Breast epithelium (tissue), 4 donors: ENCODE measurements at regions of chr1 and their contacts with region 1.

Region 1: DNA sequence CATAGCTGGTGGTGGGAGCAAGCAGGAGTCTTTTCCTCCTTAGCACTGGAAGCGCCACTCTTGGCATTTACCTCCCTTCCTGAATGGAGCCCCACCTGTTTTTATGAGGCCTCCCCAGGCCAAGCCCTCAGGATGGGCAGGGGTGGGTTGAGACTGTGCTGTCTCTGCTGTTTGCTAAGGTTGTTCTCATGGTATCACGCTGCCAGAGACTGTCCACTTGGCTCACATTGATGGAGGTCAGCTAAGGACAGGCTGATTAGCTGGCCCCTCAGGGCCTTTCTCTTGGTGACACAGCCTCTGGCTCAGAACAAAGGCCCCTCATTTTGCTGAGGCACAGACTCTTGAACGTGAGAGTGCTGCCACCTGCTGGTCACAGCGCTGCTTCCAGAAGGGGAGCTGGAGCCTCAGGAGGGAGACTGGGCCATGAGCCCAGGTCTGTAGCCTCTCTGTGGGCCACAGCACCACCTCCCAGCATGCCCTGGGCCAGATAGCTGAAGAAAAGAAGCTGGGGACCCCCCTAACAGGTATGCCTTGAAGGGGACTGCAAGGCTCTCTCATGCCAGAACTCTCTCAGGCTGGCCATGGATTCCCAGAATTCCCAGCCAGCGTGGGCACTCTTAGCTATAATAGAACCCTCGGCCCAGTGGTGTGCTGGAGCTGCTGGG is 85.6 kb downstream of the CD58 start:
- DNase-seq: peak; percentile 52 to 87
- H3K4me3 ChIP-seq: no peak overlapping the region
- H3K27ac ChIP-seq: no peak overlapping the region
- H3K4me1 ChIP-seq: peaks cover 0 to 4% of the 10 kb centered on the region in 2 donors
- H3K27me3 ChIP-seq: no peaks in the 10 kb centered on the region
- CTCF ChIP-seq: peak; percentile 64 to 86 (median 85)
- POLR2A ChIP-seq: no peak

Region 2: DNA sequence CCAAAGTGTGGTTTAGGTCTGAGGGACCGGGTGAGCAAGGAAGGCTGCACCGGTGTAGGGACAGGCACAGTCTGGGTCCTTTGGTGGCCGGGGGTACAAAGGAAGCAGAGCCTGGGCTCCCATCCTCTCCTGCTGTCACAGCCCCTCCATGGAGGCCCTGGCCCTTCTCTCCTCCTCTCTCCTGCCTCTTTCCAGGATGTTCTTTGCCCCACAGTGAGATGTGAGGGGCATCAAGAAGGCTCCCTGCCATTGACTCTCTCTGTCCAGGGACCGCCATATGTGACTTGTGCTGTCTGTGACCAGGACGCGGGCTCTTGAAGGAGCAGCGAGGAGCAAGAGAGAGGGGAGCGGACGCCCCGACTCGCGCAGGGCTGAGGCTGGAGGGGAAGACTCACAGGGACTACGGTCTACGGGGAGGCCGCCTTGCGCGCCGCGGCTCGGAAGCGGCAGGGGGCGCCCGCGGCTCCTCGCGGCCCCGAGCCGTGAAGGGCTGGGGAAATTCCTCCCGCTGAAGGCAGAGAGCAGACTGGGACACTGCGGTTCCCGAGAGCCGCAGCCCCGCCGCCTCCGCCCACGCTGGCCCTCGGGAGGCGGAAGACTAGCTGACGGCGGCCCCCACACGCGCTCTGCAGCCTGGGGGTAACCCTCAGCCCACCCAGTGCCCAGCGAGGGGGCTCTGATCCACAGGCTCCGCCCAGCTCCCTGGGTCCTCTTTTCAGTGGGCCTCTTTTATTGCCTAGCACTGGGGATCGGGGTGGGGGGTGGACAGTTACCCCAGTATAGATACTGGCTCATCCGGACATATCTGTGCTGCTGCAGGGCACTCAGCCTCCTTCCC is 333.2 kb before region 1 on chr1:
- intact Hi-C with region 1: loop called (anchors 5 kb)
- DNase-seq: peak; percentile 59 to 75
- H3K4me3 ChIP-seq: peak overlapping the region; percentile 43 to 67 (median 47)
- H3K27ac ChIP-seq: peak overlapping the region; percentile 57 to 76
- H3K4me1 ChIP-seq: no peaks in the 10 kb centered on the region
- H3K27me3 ChIP-seq: no peaks in the 10 kb centered on the region
- CTCF ChIP-seq: peak; percentile 46 to 93 (median 92)
- POLR2A ChIP-seq: no peak

Region 3: DNA sequence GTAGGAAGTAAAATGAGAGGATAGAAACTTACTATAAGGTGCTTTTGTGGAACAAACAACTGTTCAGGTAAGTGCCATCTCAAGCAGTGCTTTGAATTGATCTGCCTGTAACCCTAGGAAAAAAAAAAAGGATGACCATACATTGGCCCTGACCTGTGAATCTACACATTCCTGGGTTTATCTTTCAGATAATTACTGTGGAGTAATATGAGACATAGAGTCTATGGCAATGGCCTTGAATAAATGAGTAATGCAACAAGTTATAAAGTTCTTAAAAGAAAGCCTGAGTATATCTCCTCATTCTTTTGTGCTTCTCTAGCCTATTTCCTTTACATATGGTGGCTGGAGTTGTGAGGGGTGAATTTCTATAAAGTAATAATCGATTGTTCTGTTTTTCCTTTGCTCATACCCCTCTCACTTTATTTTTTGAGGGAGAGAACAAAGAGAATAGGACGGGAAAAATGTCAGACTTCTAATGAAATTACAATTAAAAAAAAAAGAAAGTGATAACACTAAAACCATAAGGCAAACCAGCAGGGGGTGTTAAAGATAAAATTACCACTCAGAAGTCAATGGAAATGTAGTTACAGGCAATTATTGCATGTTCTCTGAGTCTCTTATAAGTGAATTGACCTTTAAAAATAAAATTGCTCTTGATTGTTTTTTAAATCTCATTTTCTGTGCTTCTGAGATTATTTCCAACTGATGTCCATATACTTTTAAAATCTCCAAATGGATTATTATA is 124.6 kb before region 1 on chr1:
- intact Hi-C with region 1: loop called (anchors 10 kb)
- DNase-seq: no peak
- H3K4me3 ChIP-seq: no peak overlapping the region
- H3K27ac ChIP-seq: no peak overlapping the region
- H3K4me1 ChIP-seq: no peaks in the 10 kb centered on the region
- H3K27me3 ChIP-seq: no peaks in the 10 kb centered on the region
- CTCF ChIP-seq: peak in 1 of 3 donors; percentile 21
- POLR2A ChIP-seq: no peak

Region 4: GRCh38 chr1:116448813-116449281 is 36.4 kb before region 1 on chr1:
- intact Hi-C with region 1: no loop called
- DNase-seq: no peak
- H3K4me3 ChIP-seq: no peak overlapping the region
- H3K27ac ChIP-seq: peak overlapping the region in 1 of 2 donors; percentile 48
- H3K4me1 ChIP-seq: no peaks in the 10 kb centered on the region
- H3K27me3 ChIP-seq: no peaks in the 10 kb centered on the region
- CTCF ChIP-seq: no peak
- POLR2A ChIP-seq: no peak